Heart right ventricle (tissue), 16 donors: ENCODE measurements at regions of chr2 and their contacts with region 1.

Region 1: DNA sequence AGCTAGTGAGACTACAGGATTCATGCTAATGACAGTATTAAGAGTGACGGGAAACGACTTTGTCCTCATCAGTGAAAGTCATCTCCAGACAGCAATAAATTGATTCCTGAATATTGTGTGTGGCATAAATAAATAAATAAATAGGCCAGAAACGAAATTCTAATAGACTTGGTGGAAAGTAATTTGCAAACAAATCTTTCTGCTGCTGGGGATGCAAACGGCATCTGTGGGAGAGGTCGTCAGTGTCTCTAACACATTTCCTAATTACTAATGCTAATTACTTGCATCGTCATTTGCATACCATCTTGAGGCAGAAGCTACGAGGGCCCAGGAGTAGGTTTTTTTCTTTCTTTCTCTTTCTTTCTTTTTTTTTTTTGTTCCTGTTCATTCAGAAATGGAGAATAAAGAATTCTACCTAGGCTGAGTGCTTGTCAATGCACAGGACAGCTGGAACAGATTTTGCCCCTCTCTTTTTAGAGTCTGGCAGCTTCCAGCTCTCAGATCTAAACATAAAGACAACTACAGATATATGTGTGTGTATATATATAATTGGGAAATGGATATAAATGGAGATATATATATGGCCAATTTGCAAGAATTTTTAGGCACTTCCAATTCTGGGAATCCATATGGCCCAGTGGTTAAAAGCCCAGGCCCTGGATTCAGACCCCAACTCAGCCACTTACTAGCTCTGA is 75.1 kb downstream of the SPP2 start:
- DNase-seq: no peak
- ATAC-seq: no peak
- H3K4me3 ChIP-seq: no peak overlapping the region
- H3K27ac ChIP-seq: no peak overlapping the region
- H3K4me1 ChIP-seq: no peaks in the 10 kb centered on the region
- H3K27me3 ChIP-seq: peaks cover 0 to 18% (median 3%) of the 10 kb centered on the region in 7 donors
- CTCF ChIP-seq: no peak

Region 2: DNA sequence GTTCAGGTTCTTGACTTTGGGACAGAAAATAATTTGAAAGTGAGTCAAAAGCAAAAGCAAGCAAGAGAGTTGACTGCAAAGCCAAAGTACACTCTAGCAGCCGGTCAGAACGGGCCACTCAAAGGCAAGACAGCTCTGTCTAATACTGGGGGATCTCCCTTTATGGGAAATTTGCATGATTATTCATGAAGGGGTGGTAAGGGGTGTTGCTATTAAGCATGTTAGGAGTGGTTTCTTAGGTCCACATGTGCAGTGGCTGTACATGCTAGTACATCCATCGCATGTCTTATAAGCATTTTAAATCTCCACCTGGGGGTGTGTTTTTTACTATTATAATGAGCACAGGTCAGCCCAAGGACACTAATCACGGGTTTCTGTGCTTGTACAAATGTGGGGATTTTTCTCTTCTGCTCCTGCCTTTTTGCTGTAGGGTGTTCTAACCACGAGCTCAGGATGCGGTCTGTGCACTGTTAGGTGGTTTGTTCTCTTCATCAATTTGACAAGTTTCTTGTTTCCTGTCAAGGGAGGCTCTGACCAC is 135.3 kb before region 1 on chr2:
- intact Hi-C with region 1: no loop called
- DNase-seq: no peak
- ATAC-seq: no peak
- H3K4me3 ChIP-seq: no peak overlapping the region
- H3K27ac ChIP-seq: peak overlapping the region in 1 of 10 donors; percentile 20
- H3K4me1 ChIP-seq: peaks cover 0 to 7% (median 0%) of the 10 kb centered on the region in 9 donors
- H3K27me3 ChIP-seq: peaks cover 0 to 28% (median 11%) of the 10 kb centered on the region in 7 donors
- CTCF ChIP-seq: no peak

Region 3: DNA sequence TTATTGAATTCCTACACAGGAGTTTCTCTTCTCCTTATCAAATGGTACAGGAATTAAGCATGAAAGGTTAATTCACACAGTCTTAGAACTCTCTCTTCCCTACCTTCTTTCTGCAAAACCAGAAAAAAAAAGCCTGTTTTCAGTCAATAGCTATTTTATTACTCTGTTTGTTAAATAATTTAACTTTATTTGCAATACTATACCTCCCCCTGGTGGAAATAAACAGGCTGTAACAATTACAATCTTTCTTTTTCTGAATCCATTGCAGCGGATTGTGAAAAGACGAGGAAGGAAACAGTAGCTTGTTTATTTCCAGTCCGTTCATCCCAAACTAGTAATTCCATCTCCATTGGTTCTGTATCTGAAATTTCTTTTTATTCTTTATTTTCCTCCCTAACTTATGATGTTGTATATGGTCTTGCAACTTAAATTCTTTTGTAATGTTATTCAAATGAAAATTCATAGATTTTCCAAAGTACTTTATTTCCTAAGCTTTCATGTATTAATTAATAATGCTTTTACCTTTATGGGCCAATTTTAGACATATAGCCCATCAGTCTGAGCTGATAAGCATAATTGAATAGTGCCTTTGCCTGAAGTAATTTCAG is 991.4 kb after region 1 on chr2:
- intact Hi-C with region 1: loop called in 6 of 10 experiments (anchors 5 to 10 kb)
- DNase-seq: no peak
- ATAC-seq: no peak
- H3K4me3 ChIP-seq: no peak overlapping the region
- H3K27ac ChIP-seq: no peak overlapping the region
- H3K4me1 ChIP-seq: no peaks in the 10 kb centered on the region
- H3K27me3 ChIP-seq: peaks cover 0 to 13% (median 7%) of the 10 kb centered on the region in 7 donors
- CTCF ChIP-seq: peak; percentile 53 to 82 (median 71)

Region 4: GRCh38 chr2:235639428-235639773 is 1513.8 kb after region 1 on chr2:
- intact Hi-C with region 1: no loop called
- DNase-seq: peak; percentile 45 to 82
- ATAC-seq: peak; percentile 80 to 91 (median 85)
- H3K4me3 ChIP-seq: no peak overlapping the region
- H3K27ac ChIP-seq: peak overlapping the region; percentile 14 to 80 (median 74)
- H3K4me1 ChIP-seq: peaks cover 17 to 64% (median 46%) of the 10 kb centered on the region in 9 donors
- H3K27me3 ChIP-seq: no peaks in the 10 kb centered on the region
- CTCF ChIP-seq: no peak